Left cardiac atrium (tissue), 4 donors: ENCODE measurements at regions of chr6 and their contacts with region 1.

Region 1: GRCh38 chr6:152338335-152339125 is 298.6 kb downstream of the SYNE1 start:
- DNase-seq: peak; percentile 52
- ATAC-seq: peak; percentile 71 to 77

Region 2: GRCh38 chr6:152212437-152212836 is 126.1 kb before region 1 on chr6:
- intact Hi-C with region 1: loop called in 1 of 2 experiments (anchors 5 kb)
- DNase-seq: no peak
- ATAC-seq: no peak